Heart left ventricle (tissue), 16 donors: ENCODE measurements at regions of chr12 and their contacts with region 1.

Region 1: DNA sequence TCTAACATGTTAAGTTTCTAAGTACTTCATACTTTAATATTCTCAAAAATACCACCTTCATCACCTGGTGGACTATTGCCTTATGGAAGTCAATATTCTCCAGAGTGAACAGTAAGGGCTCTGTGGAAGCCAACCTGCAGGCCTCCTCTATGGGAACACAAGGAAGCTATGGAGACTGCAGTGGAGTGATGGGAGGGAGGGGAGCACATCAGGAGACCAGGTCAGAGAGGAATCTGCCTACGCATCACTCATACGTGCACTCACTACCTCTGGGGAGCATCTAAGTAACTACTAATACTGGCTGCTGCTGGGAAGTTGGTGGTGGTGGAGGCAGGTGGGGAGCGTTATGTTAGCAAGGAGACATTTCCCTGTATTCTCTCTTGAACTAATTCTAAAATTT is 19.9 kb downstream of the HECTD4 start:
- DNase-seq: no peak
- ATAC-seq: no peak
- H3K4me3 ChIP-seq: no peak overlapping the region
- H3K27ac ChIP-seq: no peak overlapping the region
- H3K4me1 ChIP-seq: no peaks in the 10 kb centered on the region
- H3K27me3 ChIP-seq: no peaks in the 10 kb centered on the region
- CTCF ChIP-seq: no peak
- POLR2A ChIP-seq: no peak

Region 2: GRCh38 chr12:112328456-112329124 is 33.7 kb before region 1 on chr12:
- intact Hi-C with region 1: loop called in 1 of 10 experiments (anchors 5 kb)
- DNase-seq: no peak
- ATAC-seq: no peak
- H3K4me3 ChIP-seq: no peak overlapping the region
- H3K27ac ChIP-seq: no peak overlapping the region
- H3K4me1 ChIP-seq: peaks cover 0 to 34% (median 14%) of the 10 kb centered on the region in 12 donors
- H3K27me3 ChIP-seq: no peaks in the 10 kb centered on the region
- CTCF ChIP-seq: no peak
- POLR2A ChIP-seq: no peak

Region 3: GRCh38 chr12:112401903-112402498 is 39.7 kb after region 1 on chr12:
- intact Hi-C with region 1: no loop called
- DNase-seq: no peak
- ATAC-seq: no peak
- H3K4me3 ChIP-seq: no peak overlapping the region
- H3K27ac ChIP-seq: no peak overlapping the region
- H3K4me1 ChIP-seq: peaks cover 0 to 4% (median 0%) of the 10 kb centered on the region in 12 donors
- H3K27me3 ChIP-seq: no peaks in the 10 kb centered on the region
- CTCF ChIP-seq: no peak
- POLR2A ChIP-seq: no peak

Region 4: GRCh38 chr12:112506513-112507166 is 144.3 kb after region 1 on chr12:
- intact Hi-C with region 1: no loop called
- DNase-seq: no peak
- ATAC-seq: no peak
- H3K4me3 ChIP-seq: no peak overlapping the region
- H3K27ac ChIP-seq: no peak overlapping the region
- H3K4me1 ChIP-seq: no peaks in the 10 kb centered on the region
- H3K27me3 ChIP-seq: no peaks in the 10 kb centered on the region
- CTCF ChIP-seq: no peak
- POLR2A ChIP-seq: no peak